Activated CD8-positive, alpha-beta memory T cell treated with anti-CD3 and anti-CD28 coated beads, Interleukin-2, amount 10 ng/mL, durations not matched to agents 7 days and 5 days (primary cell): ENCODE measurements at regions of chr3 and their contacts with region 1.

Region 1: DNA sequence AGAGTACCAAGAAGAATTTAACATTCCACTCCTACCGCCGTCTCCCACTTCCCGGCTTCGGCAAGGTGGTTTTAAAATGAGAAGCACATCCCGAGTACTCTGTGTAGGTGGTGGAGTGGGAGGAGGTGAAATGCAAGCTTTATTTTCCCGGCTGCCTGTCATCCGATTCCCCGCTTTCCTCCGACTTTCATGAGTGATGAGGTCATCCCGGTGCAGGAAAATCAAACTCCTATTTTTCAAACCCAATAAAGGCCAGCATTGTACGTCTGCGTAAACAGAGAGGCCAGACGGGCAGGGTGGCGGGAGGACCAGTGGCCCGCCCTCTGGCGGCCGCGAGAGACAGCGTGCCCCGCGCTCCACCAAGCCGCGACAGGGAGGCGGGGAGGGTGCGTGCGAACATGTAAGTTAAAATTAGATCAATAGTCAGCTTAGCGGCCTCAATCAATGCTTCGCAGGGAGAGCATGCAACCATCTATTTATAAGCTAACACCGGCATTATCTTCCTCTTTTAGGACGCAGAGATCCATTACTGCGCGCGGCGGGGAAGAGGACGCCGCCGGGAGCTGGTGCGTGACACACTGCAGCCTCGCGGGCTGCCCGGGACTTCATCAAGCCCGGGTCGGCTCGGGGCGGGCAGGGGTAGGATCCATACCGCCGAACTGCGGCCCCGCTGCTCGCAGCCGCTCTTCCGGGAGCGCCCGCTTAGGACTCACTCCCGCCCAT is 163.3 kb downstream of the CD47 start:
- DNase-seq: peak; percentile 76
- ATAC-seq: peak; percentile 97
- H3K4me3 Mint-ChIP-seq: peak overlapping the region; percentile 73
- H3K27ac Mint-ChIP-seq: peak overlapping the region; percentile 50
- H3K4me1 Mint-ChIP-seq: peaks cover 11% of the 10 kb centered on the region
- H3K27me3 Mint-ChIP-seq: peaks cover 10% of the 10 kb centered on the region

Region 2: GRCh38 chr3:107676469-107677309 is 250.8 kb before region 1 on chr3:
- CTCF ChIA-PET with region 1: interaction called, 13 read pairs
- DNase-seq: no peak
- ATAC-seq: no peak
- H3K4me3 Mint-ChIP-seq: no peak overlapping the region
- H3K27ac Mint-ChIP-seq: no peak overlapping the region
- H3K4me1 Mint-ChIP-seq: peaks cover 10% of the 10 kb centered on the region
- H3K27me3 Mint-ChIP-seq: no peaks in the 10 kb centered on the region

Region 3: DNA sequence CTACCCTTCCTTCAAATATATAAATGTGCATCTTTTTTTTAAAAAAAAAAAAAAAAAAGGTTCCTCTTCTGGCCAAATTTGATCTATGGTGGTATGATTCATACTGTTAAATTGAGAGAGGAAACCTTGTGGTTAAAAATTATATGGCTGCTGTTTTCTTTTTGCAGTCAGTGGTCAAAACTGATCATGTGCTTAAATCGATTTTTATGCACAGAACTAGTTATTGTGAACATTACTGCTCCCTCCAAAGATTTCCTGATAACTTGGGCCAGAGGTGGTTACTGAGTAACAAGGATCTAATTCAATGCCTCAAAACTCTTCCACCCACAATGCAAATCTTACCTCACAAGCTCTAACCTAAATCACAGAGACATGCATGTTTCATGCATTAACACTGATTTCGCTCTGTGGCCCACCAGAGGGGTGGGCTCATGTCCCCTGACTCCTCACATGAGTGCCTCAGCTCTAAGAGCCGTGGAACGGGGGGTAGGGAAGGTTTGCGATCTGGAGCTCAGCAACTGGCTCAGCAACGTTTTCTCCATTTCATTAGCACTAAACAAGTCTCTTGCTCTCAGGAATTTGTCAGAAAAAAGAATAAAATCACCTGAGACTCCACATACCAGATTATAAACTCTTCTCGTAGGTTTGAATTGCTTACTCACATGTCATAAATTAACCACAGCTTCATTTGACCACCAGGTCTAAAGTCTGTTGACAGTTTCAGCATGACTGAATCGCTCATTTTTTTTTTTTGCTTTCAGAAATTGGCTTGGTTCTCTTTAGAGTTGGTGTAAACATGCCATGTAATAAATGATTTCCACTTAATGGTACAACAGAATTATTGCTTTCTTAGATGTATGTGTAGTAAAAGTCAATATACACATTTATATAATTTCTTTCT is 117.1 kb before region 1 on chr3:
- CTCF ChIA-PET with region 1: interaction called, 13 read pairs
- DNase-seq: no peak
- ATAC-seq: peak; percentile 80
- H3K4me3 Mint-ChIP-seq: no peak overlapping the region
- H3K27ac Mint-ChIP-seq: peak overlapping the region; percentile 62
- H3K4me1 Mint-ChIP-seq: peaks cover 13% of the 10 kb centered on the region
- H3K27me3 Mint-ChIP-seq: no peaks in the 10 kb centered on the region

Region 4: DNA sequence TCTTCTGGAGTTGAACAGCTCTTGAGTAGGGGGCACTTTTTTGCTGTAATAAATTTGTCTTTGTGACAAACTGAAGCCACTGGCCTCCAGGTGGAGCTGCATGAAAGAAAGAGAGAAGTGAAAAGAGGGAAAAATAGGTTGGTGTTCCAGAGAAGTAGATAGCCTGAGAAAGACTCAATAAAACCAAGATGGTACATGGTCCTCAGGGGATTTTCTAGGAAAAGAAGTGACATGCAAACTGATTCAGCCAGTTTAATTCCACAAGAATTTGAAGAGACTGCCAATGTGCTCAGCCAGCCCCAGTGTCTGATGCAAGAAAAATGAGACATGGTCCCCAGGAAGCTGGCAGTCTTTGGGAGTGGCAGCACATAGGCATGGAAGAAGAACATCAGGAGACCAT is 10.6 kb after region 1 on chr3:
- CTCF ChIA-PET with region 1: interaction called, 19 read pairs
- DNase-seq: no peak
- ATAC-seq: no peak
- H3K4me3 Mint-ChIP-seq: no peak overlapping the region
- H3K27ac Mint-ChIP-seq: no peak overlapping the region
- H3K4me1 Mint-ChIP-seq: peaks cover 17% of the 10 kb centered on the region
- H3K27me3 Mint-ChIP-seq: peaks cover 9% of the 10 kb centered on the region

Region 5: GRCh38 chr3:107987036-107987947 is 59.8 kb after region 1 on chr3:
- CTCF ChIA-PET with region 1: interaction called, 12 read pairs
- DNase-seq: no peak
- ATAC-seq: no peak
- H3K4me3 Mint-ChIP-seq: no peak overlapping the region
- H3K27ac Mint-ChIP-seq: peak overlapping the region; percentile 5
- H3K4me1 Mint-ChIP-seq: peaks cover 31% of the 10 kb centered on the region
- H3K27me3 Mint-ChIP-seq: no peaks in the 10 kb centered on the region

Region 6: GRCh38 chr3:108180194-108180593 is 252.7 kb after region 1 on chr3:
- CTCF ChIA-PET with region 1: no interaction called
- DNase-seq: no peak
- ATAC-seq: no peak
- H3K4me3 Mint-ChIP-seq: no peak overlapping the region
- H3K27ac Mint-ChIP-seq: no peak overlapping the region
- H3K4me1 Mint-ChIP-seq: no peaks in the 10 kb centered on the region
- H3K27me3 Mint-ChIP-seq: no peaks in the 10 kb centered on the region